ENCODE measurements at regions of chr20 and their contacts with region 1.

Region 1: DNA sequence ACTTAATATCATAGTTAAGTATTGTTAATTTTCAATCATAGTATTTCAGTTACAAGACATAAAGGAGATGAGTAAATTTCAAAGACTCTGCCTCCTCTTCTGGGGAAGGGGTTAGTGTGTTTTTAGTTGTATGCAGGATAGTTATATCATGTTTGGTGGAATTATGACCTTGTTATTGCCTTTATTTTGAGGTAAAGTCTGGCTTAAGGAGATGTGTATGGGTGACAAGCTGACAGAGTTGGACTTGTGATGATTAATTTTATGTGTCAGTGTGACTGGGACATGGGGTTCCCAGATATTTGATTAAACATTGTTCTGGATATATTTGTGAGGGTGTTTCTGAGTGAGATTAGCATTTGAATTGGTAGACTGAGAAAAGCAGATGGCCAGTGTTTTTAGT is 343.2 kb downstream of the DOK5 start:
- DNase-seq: no peak
- H3K4me3 ChIP-seq: no peak overlapping the region
- H3K27ac ChIP-seq: no peak overlapping the region
- H3K4me1 ChIP-seq: no peaks in the 10 kb centered on the region
- H3K27me3 ChIP-seq: no peaks in the 10 kb centered on the region
- CTCF ChIP-seq: no peak

Region 2: DNA sequence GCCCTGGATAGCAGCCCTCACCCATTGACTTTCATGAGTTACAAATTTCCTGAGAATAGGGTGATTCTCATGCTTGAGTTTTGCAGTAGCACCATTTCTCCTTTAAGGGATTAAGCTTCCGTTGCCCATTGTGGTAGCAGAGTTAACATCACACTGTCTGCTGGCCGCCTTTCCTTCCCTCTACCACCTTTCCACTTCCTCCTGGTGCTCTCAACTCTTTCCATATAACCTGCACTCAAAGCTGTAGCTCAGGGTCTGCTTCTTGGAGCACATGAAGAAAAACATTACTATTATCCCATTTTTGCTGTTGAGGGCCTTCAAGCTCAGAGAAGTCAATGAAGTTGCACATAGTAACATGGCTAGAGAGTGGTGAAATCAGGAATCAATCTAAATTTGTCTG is 89.2 kb before region 1 on chr20:
- CTCF ChIA-PET with region 1: no interaction called
- POLR2A ChIA-PET with region 1: interaction called, 14 read pairs
- intact Hi-C with region 1: no loop called
- DNase-seq: no peak
- H3K4me3 ChIP-seq: no peak overlapping the region
- H3K27ac ChIP-seq: no peak overlapping the region
- H3K4me1 ChIP-seq: no peaks in the 10 kb centered on the region
- H3K27me3 ChIP-seq: no peaks in the 10 kb centered on the region
- CTCF ChIP-seq: no peak